CD4-positive, alpha-beta memory T cell (primary cell): ENCODE measurements at regions of chr9 and their contacts with region 1.

Region 1: GRCh38 chr9:72526901-72527800 is 5.7 kb downstream of the TMC1 start:
- DNase-seq: peak; percentile 74 to 93 (median 79)
- H3K4me3 ChIP-seq: peak overlapping the region; percentile 54 to 76
- H3K4me3 Mint-ChIP-seq: peak overlapping the region; percentile 81 to 94 (median 86)
- H3K27ac ChIP-seq: peak overlapping the region; percentile 68
- H3K27ac Mint-ChIP-seq: peak overlapping the region; percentile 92 to 98 (median 96)
- H3K4me1 ChIP-seq: peaks cover 27% of the 10 kb centered on the region
- H3K4me1 Mint-ChIP-seq: peaks cover 22 to 46% (median 34%) of the 10 kb centered on the region in 4 donors
- H3K27me3 ChIP-seq: no peaks in the 10 kb centered on the region
- H3K27me3 Mint-ChIP-seq: no peaks in the 10 kb centered on the region

Region 2: GRCh38 chr9:72443855-72444254 is 83.3 kb before region 1 on chr9:
- CTCF ChIA-PET with region 1: interaction called, 8 read pairs
- POLR2A ChIA-PET with region 1: interaction called, 21 read pairs
- intact Hi-C with region 1: loop called (anchors 1 kb)
- DNase-seq: peak in 3 of 5 donors; percentile 10 to 42 (median 14)
- H3K4me3 ChIP-seq: no peak overlapping the region
- H3K4me3 Mint-ChIP-seq: peak overlapping the region in 5 of 8 donors; percentile 25 to 67 (median 39)
- H3K27ac ChIP-seq: peak overlapping the region; percentile 5
- H3K27ac Mint-ChIP-seq: peak overlapping the region; percentile 48 to 92 (median 80)
- H3K4me1 ChIP-seq: peaks cover 36% of the 10 kb centered on the region
- H3K4me1 Mint-ChIP-seq: peaks cover 22 to 41% (median 31%) of the 10 kb centered on the region in 4 donors
- H3K27me3 ChIP-seq: no peaks in the 10 kb centered on the region
- H3K27me3 Mint-ChIP-seq: no peaks in the 10 kb centered on the region

Region 3: DNA sequence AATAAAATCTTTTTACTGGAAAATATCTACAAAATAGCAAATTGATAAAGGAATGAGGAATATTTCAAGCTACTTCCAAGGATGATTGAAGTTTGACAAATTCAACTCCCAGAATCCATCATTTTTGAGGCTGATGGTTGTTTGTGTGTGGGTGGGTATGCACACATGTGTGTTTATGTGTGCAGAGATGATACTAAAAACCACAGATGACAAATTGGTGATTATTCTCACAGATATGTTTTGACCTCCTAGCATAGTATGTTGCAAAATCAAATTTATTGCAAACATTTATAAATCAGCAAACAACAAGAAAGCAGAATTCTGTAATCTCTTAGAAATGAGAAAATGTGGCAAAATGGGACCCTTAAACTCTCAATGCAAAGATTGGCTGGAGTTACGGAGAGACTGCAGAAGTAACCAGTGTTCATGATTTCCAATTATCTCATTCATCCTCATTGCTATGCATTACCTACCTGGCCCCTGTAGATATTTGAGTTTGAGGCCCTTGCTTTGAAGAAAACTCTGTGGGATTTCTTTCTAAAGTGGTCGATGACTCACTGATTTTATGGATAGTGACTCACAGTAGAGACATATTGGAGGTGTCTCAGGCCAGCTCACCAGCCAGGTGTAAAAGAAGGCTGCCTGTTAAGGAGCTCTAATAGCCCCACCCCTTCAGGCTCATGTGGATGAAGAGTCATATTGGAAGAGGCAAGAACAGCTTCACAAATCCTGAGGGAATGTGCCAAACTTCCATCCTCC is 50.4 kb before region 1 on chr9:
- CTCF ChIA-PET with region 1: no interaction called
- POLR2A ChIA-PET with region 1: no interaction called
- intact Hi-C with region 1: loop called (anchors 2 kb)
- DNase-seq: peak in 2 of 5 donors; percentile 1 to 60
- H3K4me3 ChIP-seq: no peak overlapping the region
- H3K4me3 Mint-ChIP-seq: peak overlapping the region in 1 of 8 donors; percentile 12
- H3K27ac ChIP-seq: no peak overlapping the region
- H3K27ac Mint-ChIP-seq: no peak overlapping the region
- H3K4me1 ChIP-seq: peaks cover 16% of the 10 kb centered on the region
- H3K4me1 Mint-ChIP-seq: peaks cover 12 to 35% (median 18%) of the 10 kb centered on the region in 4 donors
- H3K27me3 ChIP-seq: no peaks in the 10 kb centered on the region
- H3K27me3 Mint-ChIP-seq: no peaks in the 10 kb centered on the region

Region 4: GRCh38 chr9:72592502-72593403 is 65.6 kb after region 1 on chr9:
- CTCF ChIA-PET with region 1: interaction called, 4 read pairs
- POLR2A ChIA-PET with region 1: interaction called, 4 read pairs
- intact Hi-C with region 1: loop called (anchors 1 kb)
- DNase-seq: peak in 4 of 5 donors; percentile 50 to 58 (median 56)
- H3K4me3 ChIP-seq: no peak overlapping the region
- H3K4me3 Mint-ChIP-seq: no peak overlapping the region
- H3K27ac ChIP-seq: no peak overlapping the region
- H3K27ac Mint-ChIP-seq: no peak overlapping the region
- H3K4me1 ChIP-seq: peaks cover 7% of the 10 kb centered on the region
- H3K4me1 Mint-ChIP-seq: peaks cover 8 to 22% (median 10%) of the 10 kb centered on the region in 4 donors
- H3K27me3 ChIP-seq: no peaks in the 10 kb centered on the region
- H3K27me3 Mint-ChIP-seq: peaks cover 3 to 6% of the 10 kb centered on the region in 2 donors

Region 5: GRCh38 chr9:73370053-73370452 is 842.9 kb after region 1 on chr9:
- CTCF ChIA-PET with region 1: no interaction called
- POLR2A ChIA-PET with region 1: no interaction called
- intact Hi-C with region 1: no loop called
- DNase-seq: no peak
- H3K4me3 ChIP-seq: no peak overlapping the region
- H3K4me3 Mint-ChIP-seq: no peak overlapping the region
- H3K27ac ChIP-seq: no peak overlapping the region
- H3K27ac Mint-ChIP-seq: no peak overlapping the region
- H3K4me1 ChIP-seq: no peaks in the 10 kb centered on the region
- H3K4me1 Mint-ChIP-seq: no peaks in the 10 kb centered on the region
- H3K27me3 ChIP-seq: no peaks in the 10 kb centered on the region
- H3K27me3 Mint-ChIP-seq: no peaks in the 10 kb centered on the region